ENCODE measurements at regions of chr9 and their contacts with region 1.

Region 1: DNA sequence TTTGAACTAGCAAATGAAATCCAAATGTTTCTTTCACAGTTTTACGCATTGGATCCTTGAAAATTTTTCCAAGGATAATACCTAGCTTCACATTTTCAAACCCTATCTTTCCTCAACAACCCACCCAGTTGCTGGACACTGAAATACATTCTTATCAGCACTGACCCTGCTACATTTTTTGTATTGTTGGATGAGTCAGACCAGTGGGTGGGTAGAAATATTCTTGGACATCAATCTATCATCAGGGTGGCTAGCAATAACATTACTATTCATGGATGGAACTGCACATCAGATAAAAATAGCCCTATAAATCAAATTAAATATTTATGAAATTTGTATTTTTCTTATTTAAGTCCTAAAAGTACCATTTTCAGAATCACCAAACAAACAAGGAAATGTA is 407.4 kb upstream of the IZUMO3 start:
- DNase-seq: no peak
- ATAC-seq: no peak
- H3K4me3 ChIP-seq: no peak overlapping the region
- H3K27ac ChIP-seq: no peak overlapping the region
- H3K4me1 ChIP-seq: no peaks in the 10 kb centered on the region
- H3K27me3 ChIP-seq: no peaks in the 10 kb centered on the region

Region 2: DNA sequence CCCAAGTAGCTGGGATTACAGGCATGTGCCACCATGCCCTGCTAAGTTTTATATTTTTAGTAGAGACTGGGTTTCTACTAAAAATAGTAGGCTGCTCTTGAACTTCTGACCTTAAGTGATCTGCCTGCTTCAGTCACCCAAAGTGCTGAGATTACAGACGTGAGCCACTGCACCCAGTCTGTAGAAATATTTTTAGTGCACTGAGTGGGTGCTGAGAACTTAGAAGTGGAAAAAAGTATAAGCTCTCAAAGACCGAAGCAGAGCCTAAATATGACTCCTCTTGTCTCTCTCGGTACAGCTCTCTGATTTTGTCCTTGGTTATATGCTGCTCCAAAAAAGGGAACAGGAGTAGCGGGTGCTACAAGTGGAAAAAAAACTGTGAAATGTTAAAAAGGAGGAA is 53.6 kb before region 1 on chr9:
- intact Hi-C with region 1: loop called in 1 of 4 experiments (anchors 10 kb)
- DNase-seq: no peak
- ATAC-seq: no peak
- H3K4me3 ChIP-seq: no peak overlapping the region
- H3K27ac ChIP-seq: no peak overlapping the region
- H3K4me1 ChIP-seq: no peaks in the 10 kb centered on the region
- H3K27me3 ChIP-seq: no peaks in the 10 kb centered on the region

Measured in right cardiac atrium (tissue), 5 donors.